Caco-2 (cell line): ENCODE measurements at regions of chr6 and their contacts with region 1.

Region 1: GRCh38 chr6:12208190-12208589 is 82.0 kb upstream of the EDN1 start:
- DNase-seq: no peak
- H3K4me3 ChIP-seq: no peak overlapping the region
- H3K4me3 Mint-ChIP-seq: no peak overlapping the region
- H3K27ac Mint-ChIP-seq: peak overlapping the region; percentile 74
- H3K4me1 ChIP-seq: peaks cover 9% of the 10 kb centered on the region
- H3K4me1 Mint-ChIP-seq: peaks cover 8% of the 10 kb centered on the region
- H3K27me3 ChIP-seq: no peaks in the 10 kb centered on the region
- H3K27me3 Mint-ChIP-seq: no peaks in the 10 kb centered on the region
- CTCF ChIP-seq: no peak

Region 2: GRCh38 chr6:12174878-12175277 is 33.3 kb before region 1 on chr6:
- CTCF ChIA-PET with region 1: no interaction called
- POLR2A ChIA-PET with region 1: no interaction called
- intact Hi-C with region 1: no loop called
- DNase-seq: no peak
- H3K4me3 ChIP-seq: no peak overlapping the region
- H3K4me3 Mint-ChIP-seq: no peak overlapping the region
- H3K27ac Mint-ChIP-seq: no peak overlapping the region
- H3K4me1 ChIP-seq: no peaks in the 10 kb centered on the region
- H3K4me1 Mint-ChIP-seq: no peaks in the 10 kb centered on the region
- H3K27me3 ChIP-seq: no peaks in the 10 kb centered on the region
- H3K27me3 Mint-ChIP-seq: no peaks in the 10 kb centered on the region
- CTCF ChIP-seq: no peak

Region 3: DNA sequence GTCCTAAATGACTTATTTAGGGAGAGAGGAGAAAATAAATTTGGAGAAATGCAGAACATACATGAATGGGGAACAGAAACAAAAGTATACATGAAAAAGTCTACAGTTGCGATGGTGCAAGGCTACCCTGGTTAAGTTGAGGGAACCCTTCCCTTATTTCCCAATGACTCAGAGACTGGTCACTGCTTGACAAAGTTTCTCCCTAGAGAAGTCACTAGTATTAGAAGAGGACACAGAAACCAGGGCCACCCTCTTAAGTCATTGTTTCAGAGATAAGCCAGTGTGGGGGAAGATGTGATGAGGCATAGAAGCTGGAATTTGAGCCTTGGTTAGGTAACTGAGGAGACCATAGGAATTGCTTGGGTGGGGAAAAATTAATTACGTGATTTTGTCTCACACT is 57.6 kb after region 1 on chr6:
- CTCF ChIA-PET with region 1: no interaction called
- POLR2A ChIA-PET with region 1: interaction called, 12 read pairs
- intact Hi-C with region 1: no loop called
- DNase-seq: no peak
- H3K4me3 ChIP-seq: no peak overlapping the region
- H3K4me3 Mint-ChIP-seq: no peak overlapping the region
- H3K27ac Mint-ChIP-seq: no peak overlapping the region
- H3K4me1 ChIP-seq: 0 out of 2 replicates have a peak, but pooled peaks cover 1% of the 10 kb centered on the region
- H3K4me1 Mint-ChIP-seq: peaks cover 14% of the 10 kb centered on the region
- H3K27me3 ChIP-seq: no peaks in the 10 kb centered on the region
- H3K27me3 Mint-ChIP-seq: no peaks in the 10 kb centered on the region
- CTCF ChIP-seq: no peak